Motor neuron (in vitro differentiated cells): ENCODE measurements at regions of chr18 and their contacts with region 1.

Region 1: GRCh38 chr18:22734776-22735627 is 198.1 kb upstream of the RBBP8 start:
- ATAC-seq: peak in 1 of 8 experiments; percentile 45
- H3K4me3 ChIP-seq: no peak overlapping the region
- H3K27ac ChIP-seq: no peak overlapping the region
- H3K4me1 ChIP-seq: no peaks in the 10 kb centered on the region

Region 2: DNA sequence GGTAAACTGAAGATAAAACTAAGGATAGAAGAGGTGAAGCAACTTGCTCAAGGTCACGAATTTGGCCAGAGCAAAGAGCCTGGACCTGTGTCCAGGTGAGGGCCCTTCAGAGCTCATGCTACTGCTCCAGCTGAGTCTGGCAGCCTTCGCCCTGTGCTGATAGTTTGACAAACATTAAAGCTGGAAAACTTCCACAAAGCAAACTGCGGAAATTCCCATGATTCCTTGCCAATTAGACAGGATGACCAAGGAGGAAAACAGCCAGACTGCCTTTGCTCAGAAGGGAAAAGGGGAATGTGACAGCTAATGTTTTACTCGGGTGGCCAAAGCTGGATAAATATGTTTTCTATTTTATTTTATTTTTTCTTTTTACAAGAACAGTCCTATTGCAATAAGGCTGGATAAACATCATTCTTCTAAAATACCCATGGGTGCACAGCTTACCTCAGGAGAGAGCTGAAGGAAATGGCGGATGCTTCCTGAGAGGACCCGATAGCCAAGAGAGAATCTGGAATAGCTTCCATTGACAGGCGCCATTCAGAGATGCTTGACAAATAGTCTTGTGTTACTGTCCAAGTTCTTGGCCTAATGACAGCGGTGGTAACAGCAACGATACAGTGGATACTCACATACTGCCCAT is 312.0 kb before region 1 on chr18:
- in situ Hi-C with region 1: no loop called
- ATAC-seq: no peak
- H3K4me3 ChIP-seq: no peak overlapping the region
- H3K27ac ChIP-seq: no peak overlapping the region
- H3K4me1 ChIP-seq: no peaks in the 10 kb centered on the region

Region 3: GRCh38 chr18:22639026-22639463 is 96.0 kb before region 1 on chr18:
- in situ Hi-C with region 1: no loop called
- ATAC-seq: peak in 1 of 8 experiments; percentile 32
- H3K4me3 ChIP-seq: no peak overlapping the region
- H3K27ac ChIP-seq: no peak overlapping the region
- H3K4me1 ChIP-seq: no peaks in the 10 kb centered on the region

Region 4: GRCh38 chr18:22846088-22846683 is 111.2 kb after region 1 on chr18:
- in situ Hi-C with region 1: loop called in 1 of 9 experiments (anchors 25 kb)
- ATAC-seq: peak in 1 of 8 experiments; percentile 42
- H3K4me3 ChIP-seq: no peak overlapping the region
- H3K27ac ChIP-seq: no peak overlapping the region
- H3K4me1 ChIP-seq: no peaks in the 10 kb centered on the region